Common myeloid progenitor, CD34-positive (primary cell): ENCODE measurements at regions of chr17 and their contacts with region 1.

Region 1: DNA sequence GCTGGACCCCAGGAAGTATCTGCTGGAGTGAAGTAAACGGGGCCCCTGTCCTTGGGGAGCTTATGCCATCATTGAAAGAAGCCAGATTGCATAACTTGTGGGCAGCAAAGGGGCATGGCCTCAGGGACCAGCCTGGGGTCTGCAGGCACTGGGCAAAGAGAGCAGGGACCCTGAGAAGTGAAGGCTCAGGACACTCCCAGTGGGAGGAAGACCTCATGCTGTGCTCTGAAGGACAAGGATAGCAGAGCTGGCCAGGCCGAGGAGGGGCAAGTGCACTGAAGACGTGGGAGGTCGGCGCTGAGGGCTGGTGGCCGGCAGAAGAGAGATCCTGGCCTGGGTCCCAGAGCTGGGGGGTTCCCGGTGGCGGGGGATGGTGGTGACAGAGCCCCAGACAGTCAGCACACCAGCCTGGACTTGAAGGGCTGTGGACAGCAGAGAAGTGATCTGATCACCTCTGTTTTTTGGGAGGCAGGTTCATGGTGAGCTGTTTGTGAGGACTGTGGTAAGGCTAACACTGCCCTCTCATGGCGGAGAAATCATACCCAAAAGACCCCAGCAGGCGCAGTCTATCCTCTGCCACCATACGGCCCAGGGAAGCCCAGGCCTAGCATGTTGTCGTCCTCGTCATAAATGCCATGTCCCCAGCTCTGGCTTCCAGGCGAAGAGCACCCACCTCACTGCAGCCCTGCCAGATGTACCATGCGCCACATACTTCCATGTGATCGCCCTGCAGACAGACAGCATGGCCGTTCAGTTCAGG is 7.1 kb upstream of the CNP start:
- DNase-seq: peak; percentile 61 to 76 (median 76)
- H3K4me3 ChIP-seq: no peak overlapping the region
- H3K27ac ChIP-seq: no peak overlapping the region
- H3K4me1 ChIP-seq: peaks cover 0 to 21% (median 7%) of the 10 kb centered on the region in 4 experiments
- H3K27me3 ChIP-seq: no peaks in the 10 kb centered on the region

Region 2: DNA sequence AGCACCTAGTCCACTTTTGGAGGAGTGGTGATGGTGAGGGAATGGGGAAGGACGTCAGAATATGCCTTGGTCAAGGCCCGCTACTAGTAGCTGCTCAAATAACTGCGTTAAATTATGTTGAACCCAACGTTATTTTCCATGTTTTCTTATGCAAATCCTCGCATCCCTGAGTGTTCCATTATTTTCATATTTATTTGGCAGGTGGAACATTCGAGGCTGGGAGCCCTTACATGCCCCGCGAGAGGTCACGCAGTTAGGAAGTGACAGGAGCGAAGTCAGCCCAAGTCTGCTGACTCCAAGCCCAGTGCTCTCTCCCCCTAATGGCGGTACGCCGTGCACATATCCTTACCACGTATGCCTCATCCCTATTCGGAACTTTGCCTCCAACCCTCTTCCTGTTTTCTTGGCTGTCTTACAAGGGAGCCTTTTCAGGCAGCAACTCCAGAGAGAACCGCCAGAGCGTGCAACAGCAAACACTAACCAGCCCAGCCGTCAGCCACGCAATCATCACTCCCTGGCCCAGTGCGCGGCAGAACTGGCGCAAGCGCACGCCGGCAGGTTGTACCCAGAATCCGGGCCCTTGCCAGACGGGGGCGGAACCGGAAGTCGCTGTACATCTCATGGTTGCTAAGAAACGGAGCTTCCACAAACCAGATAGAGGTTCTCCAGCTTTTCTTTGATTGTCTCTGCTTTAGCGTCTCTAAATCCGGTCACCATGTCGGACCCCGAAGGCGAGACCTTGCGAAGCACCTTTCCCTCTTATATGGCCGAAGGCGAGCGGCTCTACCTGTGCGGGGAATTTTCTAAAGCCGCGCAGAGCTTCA is 29.3 kb before region 1 on chr17 and contains the start of gene ODAD4:
- CTCF ChIA-PET with region 1: interaction called, 37 read pairs
- POLR2A ChIA-PET with region 1: no interaction called
- DNase-seq: peak; percentile 98 to 99 (median 99)
- H3K4me3 ChIP-seq: peak within 1 kb of the TSS; percentile 42 to 86 (median 69)
- H3K27ac ChIP-seq: peak within 1 kb of the TSS; percentile 46 to 82
- H3K4me1 ChIP-seq: peaks cover 5 to 37% (median 22%) of the 10 kb centered on the region in 4 experiments
- H3K27me3 ChIP-seq: no peaks in the 10 kb centered on the region

Region 3: GRCh38 chr17:42002792-42003301 is 43.3 kb after region 1 on chr17:
- CTCF ChIA-PET with region 1: no interaction called
- POLR2A ChIA-PET with region 1: no interaction called
- DNase-seq: no peak
- H3K4me3 ChIP-seq: no peak overlapping the region
- H3K27ac ChIP-seq: no peak overlapping the region
- H3K4me1 ChIP-seq: no peaks in the 10 kb centered on the region
- H3K27me3 ChIP-seq: no peaks in the 10 kb centered on the region